Brain microvascular endothelial cell (primary cell): ENCODE measurements at regions of chr7 and their contacts with region 1.

Region 1: DNA sequence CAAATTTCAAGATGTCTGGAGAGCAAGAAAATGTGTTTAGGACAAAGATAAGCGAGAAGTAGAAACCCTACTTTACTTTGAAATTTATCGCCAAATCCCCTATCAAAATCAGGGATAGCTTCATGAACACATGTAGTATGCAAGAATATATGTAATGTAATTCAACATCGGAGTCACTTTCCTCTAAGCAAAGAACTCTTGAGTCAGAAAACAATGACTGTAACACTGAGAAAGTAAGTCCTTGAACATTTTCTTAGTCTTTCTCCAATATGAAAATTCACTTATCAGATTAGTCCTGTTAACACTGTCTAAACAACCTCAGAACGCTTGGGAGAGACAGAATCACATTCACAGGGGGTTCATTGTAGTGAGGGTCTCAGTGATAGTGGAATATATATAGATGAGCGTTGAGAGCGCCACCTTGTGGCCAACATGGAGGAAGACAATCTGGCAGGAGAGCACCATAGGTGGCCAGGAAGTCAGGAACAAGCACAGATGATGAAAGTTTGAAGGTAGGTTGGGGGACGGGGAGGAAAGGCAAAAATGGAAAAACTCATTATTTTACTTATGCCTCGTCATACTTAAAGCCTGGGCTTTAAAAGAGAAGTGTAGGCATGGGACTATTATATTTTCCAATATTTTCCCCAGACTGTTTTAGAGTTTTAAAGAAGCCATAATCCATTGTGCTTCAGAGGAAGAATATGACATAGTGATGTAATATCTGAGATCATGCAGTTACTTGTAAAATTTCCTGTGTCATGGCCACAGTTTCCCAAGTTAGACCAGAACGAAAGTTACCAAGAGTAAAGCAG is 115.5 kb upstream of the GNAI1 start:
- DNase-seq: peak; percentile 28
- H3K4me3 ChIP-seq: no peak overlapping the region
- H3K27ac ChIP-seq: no peak overlapping the region
- H3K27me3 ChIP-seq: no peaks in the 10 kb centered on the region
- CTCF ChIP-seq: peak; percentile 92

Region 2: GRCh38 chr7:79820387-79820786 is 198.8 kb before region 1 on chr7:
- in situ Hi-C with region 1: loop called (anchors 25 kb)
- DNase-seq: peak; percentile 84
- H3K4me3 ChIP-seq: peak overlapping the region; percentile 23
- H3K27ac ChIP-seq: no peak overlapping the region
- H3K27me3 ChIP-seq: no peaks in the 10 kb centered on the region
- CTCF ChIP-seq: no peak

Region 3: GRCh38 chr7:80098795-80099194 is 79.6 kb after region 1 on chr7:
- in situ Hi-C with region 1: no loop called
- DNase-seq: no peak
- H3K4me3 ChIP-seq: no peak overlapping the region
- H3K27ac ChIP-seq: no peak overlapping the region
- H3K27me3 ChIP-seq: no peaks in the 10 kb centered on the region
- CTCF ChIP-seq: peak; percentile 43